Calu3 (cell line): ENCODE measurements at regions of chr3 and their contacts with region 1.

Region 1: DNA sequence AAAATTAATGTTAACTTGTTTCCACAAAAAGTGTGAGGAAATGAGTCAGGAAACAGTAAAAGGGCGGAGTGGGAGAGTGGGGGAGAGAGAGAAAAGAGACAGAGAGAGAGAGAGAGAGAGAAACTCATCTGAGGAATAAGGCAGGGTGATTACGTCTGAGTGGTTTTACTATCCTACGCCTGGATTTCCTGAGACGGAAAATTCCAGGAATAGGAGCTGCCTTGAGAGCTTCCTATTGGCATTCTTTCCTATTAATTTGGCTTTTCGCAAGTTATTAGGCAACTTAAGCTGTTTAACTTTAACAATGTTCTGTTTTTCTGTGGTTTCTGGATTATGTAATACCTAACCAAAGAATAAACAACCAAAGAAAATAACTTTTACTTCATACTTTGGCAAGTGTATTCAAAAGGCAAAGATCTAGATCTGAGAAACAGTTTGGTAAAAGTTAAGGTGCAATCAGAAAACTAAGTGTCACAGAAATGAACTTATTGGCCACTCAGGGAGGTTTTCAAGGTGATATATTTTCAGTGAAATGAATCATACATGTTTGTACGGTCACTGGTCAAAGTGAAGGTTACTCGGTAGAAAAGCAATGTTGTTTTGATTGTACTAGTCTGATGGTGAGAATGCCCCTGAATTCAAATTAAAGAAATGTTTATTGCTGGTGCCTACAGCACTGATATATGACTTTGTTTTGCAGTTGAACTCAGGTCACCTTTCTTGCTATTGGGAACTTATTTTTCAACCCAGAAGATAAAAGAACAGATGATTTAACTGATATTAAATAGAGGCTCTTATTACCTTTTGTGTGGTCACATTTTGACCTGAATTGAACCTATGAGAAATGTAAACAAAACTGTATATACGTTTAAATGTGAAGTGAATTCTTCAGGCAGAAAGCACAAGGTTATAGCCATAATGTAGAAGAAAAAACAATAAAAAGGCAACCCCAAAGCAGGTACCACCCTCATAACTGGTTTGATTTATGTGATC is 39.9 kb upstream of the TNFSF10 start:
- DNase-seq: peak; percentile 42
- H3K4me3 Mint-ChIP-seq: peak overlapping the region; percentile 27
- H3K27ac Mint-ChIP-seq: peak overlapping the region; percentile 69
- H3K4me1 Mint-ChIP-seq: peaks cover 44% of the 10 kb centered on the region
- H3K27me3 Mint-ChIP-seq: no peaks in the 10 kb centered on the region
- CTCF ChIP-seq: no peak

Region 2: DNA sequence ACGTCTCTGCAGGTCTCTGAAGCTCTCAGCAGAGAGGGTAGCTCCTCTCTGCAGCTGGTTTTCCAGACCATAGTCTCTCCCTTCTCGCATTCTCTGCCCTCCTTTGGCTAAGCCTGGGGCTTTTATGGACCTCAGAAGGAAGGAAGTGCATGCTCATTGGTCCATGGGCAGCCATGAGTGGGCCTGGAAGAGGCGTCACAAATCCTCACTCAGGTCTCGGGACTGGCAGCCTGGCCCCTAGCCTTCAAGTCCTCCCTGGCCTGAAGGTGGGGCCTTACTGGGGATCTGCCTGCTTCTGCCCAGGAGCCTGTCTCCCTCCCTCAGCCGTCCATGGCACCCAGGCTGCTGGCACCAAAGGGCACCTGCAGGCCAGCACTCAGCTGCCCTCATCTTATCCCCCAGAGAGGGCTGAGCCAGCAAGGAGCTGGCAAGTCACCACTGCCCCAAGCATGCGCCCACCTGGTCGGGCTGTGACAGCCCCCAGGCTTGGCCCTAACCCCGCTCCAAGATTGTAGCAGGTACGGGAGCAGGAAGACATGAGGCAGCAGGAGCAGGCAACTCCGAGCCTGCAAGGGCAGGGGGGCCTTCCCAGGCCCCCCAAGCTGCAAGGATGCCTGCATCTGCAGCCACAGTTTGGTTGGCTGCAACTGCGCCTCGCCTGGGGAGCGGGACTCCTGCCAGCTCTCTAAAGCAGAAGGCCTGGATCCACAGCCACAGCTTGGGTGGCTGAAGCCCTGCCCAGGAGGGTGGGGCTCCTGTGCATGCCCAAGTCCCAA is 152.3 kb before region 1 on chr3:
- CTCF ChIA-PET with region 1: no interaction called
- intact Hi-C with region 1: no loop called
- DNase-seq: no peak
- H3K4me3 Mint-ChIP-seq: no peak overlapping the region
- H3K27ac Mint-ChIP-seq: no peak overlapping the region
- H3K4me1 Mint-ChIP-seq: no peaks in the 10 kb centered on the region
- H3K27me3 Mint-ChIP-seq: no peaks in the 10 kb centered on the region
- CTCF ChIP-seq: no peak

Region 3: DNA sequence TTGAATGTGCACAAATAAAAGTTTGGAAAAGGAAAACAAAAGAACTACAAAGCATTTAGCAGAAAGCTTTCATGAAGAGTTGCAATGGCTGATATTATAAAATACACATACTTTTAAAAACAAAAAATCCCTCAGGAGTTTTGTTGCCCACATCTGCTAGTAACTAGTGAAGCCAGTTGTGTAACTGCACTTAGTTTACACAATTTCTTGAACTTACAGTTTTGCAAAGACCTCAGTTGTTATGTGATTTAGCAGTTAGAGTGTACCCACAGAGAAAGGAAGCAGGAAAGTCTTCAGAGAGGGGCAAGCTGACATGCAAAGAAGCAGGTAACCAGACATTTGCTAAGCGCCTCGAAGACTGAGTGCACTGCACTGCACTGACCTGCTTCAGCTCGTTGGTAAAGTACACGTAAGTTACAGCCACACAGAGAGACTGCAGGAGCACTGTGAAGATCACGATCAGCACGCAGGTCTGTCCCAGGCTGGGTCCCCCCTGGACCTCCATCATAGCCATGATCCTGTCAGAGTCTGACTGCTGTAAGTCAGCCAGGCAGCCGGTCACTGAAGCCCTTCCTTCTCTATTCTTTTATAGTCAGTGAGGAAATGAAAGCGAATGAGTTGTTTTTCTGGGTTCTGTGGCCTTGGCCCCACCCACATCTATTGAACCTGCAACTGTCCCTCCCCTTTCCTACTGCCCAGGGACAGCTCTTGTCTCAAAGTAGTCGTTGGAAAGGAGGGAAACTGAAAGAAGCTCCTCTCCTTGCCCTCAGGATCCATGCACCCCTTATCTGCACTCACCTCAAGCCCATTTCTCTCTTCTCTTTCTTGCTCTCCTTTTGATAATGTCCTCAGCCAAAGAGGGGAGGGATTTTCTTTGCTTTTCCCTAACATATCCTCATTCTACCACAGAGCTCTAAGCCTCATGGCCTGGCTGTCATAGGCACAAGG is 40.0 kb before region 1 on chr3 and contains the start of gene TNFSF10:
- CTCF ChIA-PET with region 1: interaction called, 6 read pairs
- intact Hi-C with region 1: loop called (anchors 1 kb)
- DNase-seq: peak; percentile 82
- H3K4me3 Mint-ChIP-seq: peak within 1 kb of the TSS; percentile 76
- H3K27ac Mint-ChIP-seq: peak within 1 kb of the TSS; percentile 73
- H3K4me1 Mint-ChIP-seq: peaks cover 37% of the 10 kb centered on the region
- H3K27me3 Mint-ChIP-seq: no peaks in the 10 kb centered on the region
- CTCF ChIP-seq: no peak
- total RNA-seq, gene TNFSF10: 41.4 and 58.7 TPM in 2 replicates

Region 4: GRCh38 chr3:172622916-172623700 is 59.9 kb after region 1 on chr3:
- CTCF ChIA-PET with region 1: interaction called, 3 read pairs
- intact Hi-C with region 1: loop called (anchors 2 kb)
- DNase-seq: peak; percentile 74
- H3K4me3 Mint-ChIP-seq: no peak overlapping the region
- H3K27ac Mint-ChIP-seq: peak overlapping the region; percentile 63
- H3K4me1 Mint-ChIP-seq: peaks cover 53% of the 10 kb centered on the region
- H3K27me3 Mint-ChIP-seq: no peaks in the 10 kb centered on the region
- CTCF ChIP-seq: peak; percentile 61

Region 5: DNA sequence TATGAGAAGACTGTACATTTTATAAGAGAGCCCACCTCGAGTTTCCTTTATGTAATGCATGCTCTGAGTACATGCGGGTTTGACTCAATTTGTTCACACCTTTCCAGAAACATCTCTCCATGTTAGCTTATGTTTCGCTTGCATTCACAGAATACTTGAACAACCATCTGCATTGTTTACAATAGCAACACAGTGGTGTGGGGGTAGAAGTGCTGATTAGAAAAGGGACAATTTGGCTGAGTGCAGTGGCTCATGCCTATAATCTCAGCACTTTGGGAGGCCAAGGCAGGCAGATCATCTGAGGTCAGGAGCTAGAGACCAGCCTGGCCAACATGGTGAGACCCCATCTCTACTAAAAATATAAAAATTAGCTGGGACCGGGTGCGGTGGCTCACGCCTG is 86.8 kb after region 1 on chr3:
- CTCF ChIA-PET with region 1: no interaction called
- intact Hi-C with region 1: no loop called
- DNase-seq: no peak
- H3K4me3 Mint-ChIP-seq: no peak overlapping the region
- H3K27ac Mint-ChIP-seq: no peak overlapping the region
- H3K4me1 Mint-ChIP-seq: peaks cover 49% of the 10 kb centered on the region
- H3K27me3 Mint-ChIP-seq: no peaks in the 10 kb centered on the region
- CTCF ChIP-seq: no peak